ENCODE measurements at regions of chr10 and their contacts with region 1.

Region 1: DNA sequence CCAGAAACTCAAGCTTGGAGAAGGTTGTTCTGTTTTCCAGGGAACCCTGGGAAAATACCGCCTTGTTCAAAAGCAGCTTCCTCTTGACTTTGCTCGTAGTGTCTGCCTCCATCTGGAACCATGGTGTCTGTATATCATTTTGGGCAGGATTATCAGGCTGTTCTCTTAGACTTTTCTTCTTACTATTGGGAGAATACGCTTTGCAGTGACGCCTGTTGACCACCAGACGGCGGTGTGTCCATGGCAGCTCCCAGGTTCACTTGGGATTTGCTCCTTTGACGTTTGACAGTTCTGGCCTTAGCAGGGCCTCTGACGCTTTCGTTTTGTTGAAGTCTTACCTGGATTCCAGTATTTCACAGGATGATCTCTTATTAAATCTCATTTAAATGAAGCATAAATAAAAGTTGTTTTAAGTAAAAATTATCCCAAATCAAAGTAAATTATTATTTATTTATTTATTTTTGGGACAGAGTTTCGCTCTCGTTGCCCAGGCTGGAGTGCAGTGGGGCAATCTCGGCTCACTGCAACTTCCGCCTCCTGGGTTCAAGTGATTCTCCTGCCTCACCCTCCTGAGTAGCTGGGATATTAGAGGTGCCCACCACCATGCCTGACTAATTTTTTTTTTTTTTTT is 41.8 kb upstream of the GJD4 start:
- DNase-seq: no peak
- ATAC-seq: peak; percentile 61
- H3K4me3 Mint-ChIP-seq: no peak overlapping the region
- H3K27ac Mint-ChIP-seq: no peak overlapping the region
- H3K4me1 Mint-ChIP-seq: peaks cover 16% of the 10 kb centered on the region
- H3K27me3 Mint-ChIP-seq: no peaks in the 10 kb centered on the region
- CTCF ChIP-seq: peak; percentile 99

Region 2: DNA sequence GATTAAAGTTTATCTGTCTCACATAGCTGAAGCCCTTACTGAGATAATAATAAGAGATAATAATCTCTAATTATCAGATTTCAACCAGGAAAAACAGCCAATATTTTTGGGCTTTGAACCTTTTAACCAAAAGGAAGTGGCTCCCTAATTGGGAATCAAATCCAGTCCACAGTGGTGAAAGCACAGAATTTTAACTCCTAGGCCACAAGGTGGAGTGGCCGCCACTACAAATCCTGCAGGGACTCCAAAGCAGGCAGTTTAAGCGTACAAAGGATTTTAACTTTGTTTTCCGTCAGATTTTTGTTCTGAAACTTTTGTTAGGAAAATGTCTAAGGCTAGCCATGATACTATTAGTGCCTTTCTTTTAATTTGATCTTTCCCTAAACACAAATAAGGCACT is 326.6 kb before region 1 on chr10:
- CTCF ChIA-PET with region 1: interaction called, 10 read pairs
- POLR2A ChIA-PET with region 1: no interaction called
- intact Hi-C with region 1: loop called (anchors 1 kb)
- DNase-seq: no peak
- ATAC-seq: no peak
- H3K4me3 Mint-ChIP-seq: no peak overlapping the region
- H3K27ac Mint-ChIP-seq: no peak overlapping the region
- H3K4me1 Mint-ChIP-seq: no peaks in the 10 kb centered on the region
- H3K27me3 Mint-ChIP-seq: no peaks in the 10 kb centered on the region
- CTCF ChIP-seq: no peak

Region 3: GRCh38 chr10:35451151-35452016 is 112.0 kb before region 1 on chr10:
- CTCF ChIA-PET with region 1: no interaction called
- POLR2A ChIA-PET with region 1: no interaction called
- intact Hi-C with region 1: loop called (anchors 5 kb)
- DNase-seq: no peak
- ATAC-seq: peak; percentile 94
- H3K4me3 Mint-ChIP-seq: peak overlapping the region; percentile 1
- H3K27ac Mint-ChIP-seq: peak overlapping the region; percentile 73
- H3K4me1 Mint-ChIP-seq: peaks cover 80% of the 10 kb centered on the region
- H3K27me3 Mint-ChIP-seq: no peaks in the 10 kb centered on the region
- CTCF ChIP-seq: no peak

Region 4: DNA sequence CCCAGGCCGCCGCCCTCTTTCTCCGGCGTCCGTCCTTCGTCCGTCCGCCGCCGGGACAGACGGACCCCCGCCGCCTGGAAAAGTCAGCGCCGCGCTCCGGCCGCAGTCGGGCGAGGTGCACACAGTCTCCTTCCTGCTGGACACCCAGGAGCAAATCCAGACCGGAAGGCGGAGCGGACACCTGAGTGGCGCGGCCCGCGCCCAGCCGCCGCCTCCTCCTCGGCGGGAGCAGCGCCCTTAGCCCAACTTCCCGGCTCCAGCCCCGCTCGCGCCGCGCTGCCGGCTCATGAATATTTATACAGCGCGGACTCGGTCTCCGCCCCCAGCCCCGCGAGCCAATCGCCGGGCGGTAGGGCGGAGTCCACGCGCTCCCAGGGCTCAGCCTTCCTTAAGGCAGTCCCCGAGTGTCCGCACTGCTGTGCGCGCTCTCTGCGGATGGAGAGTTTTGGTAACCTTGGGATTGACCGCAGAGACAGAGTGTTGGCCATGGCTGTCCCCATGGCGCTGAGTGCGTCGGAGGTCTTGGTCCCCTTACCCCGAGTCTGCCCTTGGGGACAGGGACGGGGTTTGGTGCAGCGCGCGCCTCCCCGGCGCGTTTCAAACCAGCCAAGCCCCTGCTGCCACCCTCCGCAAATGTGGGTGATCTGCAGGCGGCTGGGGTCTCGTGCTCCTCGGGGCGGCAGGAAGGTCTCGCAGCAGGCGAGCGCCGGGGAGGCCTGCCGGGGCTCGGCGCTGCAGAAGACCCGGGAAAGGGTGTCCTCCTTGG is 78.8 kb after region 1 on chr10 and contains the start of gene FZD8:
- CTCF ChIA-PET with region 1: interaction called, 4 read pairs
- POLR2A ChIA-PET with region 1: no interaction called
- intact Hi-C with region 1: loop called (anchors 5 kb)
- DNase-seq: peak; percentile 69
- ATAC-seq: peak; percentile 87
- H3K4me3 Mint-ChIP-seq: peak within 1 kb of the TSS; percentile 88
- H3K27ac Mint-ChIP-seq: no peak within 1 kb of the TSS
- H3K4me1 Mint-ChIP-seq: peaks cover 30% of the 10 kb centered on the region
- H3K27me3 Mint-ChIP-seq: peaks cover 33% of the 10 kb centered on the region
- CTCF ChIP-seq: no peak
- total RNA-seq, gene FZD8: 0.17 and 0.22 TPM in 2 replicates

Region 5: DNA sequence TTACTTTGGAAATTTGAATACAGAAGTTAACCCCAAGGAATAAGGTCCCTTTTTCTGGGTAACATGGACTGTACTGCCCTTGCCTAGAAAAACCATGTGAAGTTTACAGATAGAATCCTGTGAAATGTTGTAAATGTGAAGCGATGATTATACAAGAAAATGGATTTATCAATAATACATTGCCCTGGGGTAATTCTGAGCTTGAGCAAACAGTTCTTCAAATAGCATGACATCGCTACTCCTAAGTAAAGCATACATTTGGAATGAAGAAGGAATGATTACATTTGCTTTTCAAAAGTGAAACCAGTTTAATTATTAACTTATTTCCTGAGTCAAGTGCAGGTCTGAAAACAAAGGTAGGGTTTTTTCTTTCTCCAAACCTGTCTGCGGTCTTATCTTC is 122.0 kb after region 1 on chr10:
- CTCF ChIA-PET with region 1: no interaction called
- POLR2A ChIA-PET with region 1: no interaction called
- intact Hi-C with region 1: no loop called
- DNase-seq: no peak
- ATAC-seq: no peak
- H3K4me3 Mint-ChIP-seq: no peak overlapping the region
- H3K27ac Mint-ChIP-seq: no peak overlapping the region
- H3K4me1 Mint-ChIP-seq: no peaks in the 10 kb centered on the region
- H3K27me3 Mint-ChIP-seq: peaks cover 5% of the 10 kb centered on the region
- CTCF ChIP-seq: no peak

Region 6: DNA sequence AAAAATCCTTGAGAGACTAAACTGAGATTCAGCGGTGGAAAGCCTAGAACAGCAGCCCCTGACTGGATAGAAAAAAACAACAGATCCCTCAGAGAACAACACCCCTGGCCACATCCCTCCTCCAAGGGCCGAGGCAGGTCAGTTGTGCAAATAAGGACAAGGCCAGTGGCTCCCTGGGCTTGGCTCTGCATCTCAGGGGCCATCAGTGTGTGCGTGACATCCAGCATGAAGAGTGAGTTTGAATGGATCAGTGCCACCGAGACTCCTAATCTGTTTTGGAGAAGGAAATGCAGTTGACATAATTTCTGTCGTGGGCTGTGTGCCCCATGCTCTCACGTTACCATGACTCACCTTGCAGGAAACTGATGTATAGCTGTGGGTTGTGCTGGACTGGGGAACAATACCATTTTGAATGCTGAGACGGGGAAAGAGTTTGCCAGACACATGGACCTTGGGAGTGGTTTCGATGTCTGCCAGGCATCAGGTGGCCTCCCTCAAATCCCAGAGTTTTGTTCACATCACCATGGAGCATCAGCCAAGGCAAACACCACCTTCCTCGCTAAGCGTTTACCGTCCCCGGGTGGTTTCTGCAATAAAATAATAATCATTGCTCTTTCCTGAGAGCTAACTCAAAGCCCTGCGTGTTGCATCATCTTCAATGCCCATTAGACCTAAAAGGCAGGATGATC is 231.9 kb after region 1 on chr10:
- CTCF ChIA-PET with region 1: no interaction called
- POLR2A ChIA-PET with region 1: no interaction called
- intact Hi-C with region 1: no loop called
- DNase-seq: no peak
- ATAC-seq: no peak
- H3K4me3 Mint-ChIP-seq: no peak overlapping the region
- H3K27ac Mint-ChIP-seq: no peak overlapping the region
- H3K4me1 Mint-ChIP-seq: no peaks in the 10 kb centered on the region
- H3K27me3 Mint-ChIP-seq: no peaks in the 10 kb centered on the region
- CTCF ChIP-seq: no peak

Region 7: DNA sequence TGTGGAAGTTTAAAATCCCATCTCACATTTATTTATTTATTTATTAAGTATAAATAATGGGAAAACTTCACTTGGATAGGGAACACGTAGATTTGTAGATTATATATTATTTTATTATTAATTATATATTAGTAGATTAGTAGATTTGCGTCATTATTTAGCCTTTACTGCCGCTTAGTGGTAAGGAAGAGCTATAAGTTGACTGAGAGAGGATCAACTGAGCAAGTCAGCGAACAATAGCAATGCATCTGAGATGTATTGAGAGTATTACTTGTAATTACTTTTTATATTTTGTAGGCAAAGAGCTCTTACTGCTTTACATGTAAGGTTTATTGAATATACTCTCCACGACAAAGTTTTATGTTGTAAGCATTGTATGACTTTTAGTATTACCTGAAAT is 1317.5 kb after region 1 on chr10:
- CTCF ChIA-PET with region 1: no interaction called
- POLR2A ChIA-PET with region 1: no interaction called
- intact Hi-C with region 1: loop called (anchors 5 kb)
- DNase-seq: no peak
- ATAC-seq: no peak
- H3K4me3 Mint-ChIP-seq: no peak overlapping the region
- H3K27ac Mint-ChIP-seq: no peak overlapping the region
- H3K4me1 Mint-ChIP-seq: no peaks in the 10 kb centered on the region
- H3K27me3 Mint-ChIP-seq: peaks cover 2% of the 10 kb centered on the region
- CTCF ChIP-seq: no peak

Measured in activated B cell treated with CpG ODN at 0.5 μM for 24 hours (primary cell).